ENCODE measurements at regions of chr1 and their contacts with region 1.

Region 1: GRCh38 chr1:1554926-1555915 is 14.8 kb upstream of the TMEM240 start:
- DNase-seq: peak; percentile 48 to 78 (median 66)
- ATAC-seq: peak; percentile 67
- H3K4me3 ChIP-seq: no peak overlapping the region
- H3K27ac ChIP-seq: no peak overlapping the region
- H3K4me1 ChIP-seq: peaks cover 0 to 38% of the 10 kb centered on the region in 2 experiments; a peak in 3 of 5 replicates
- H3K27me3 ChIP-seq: no peaks in the 10 kb centered on the region
- CTCF ChIP-seq: no peak
- EP300 ChIP-seq: no peak
- POLR2A ChIP-seq: peak; percentile 54; the same call in 1 of the 2 replicates
- RAD21 ChIP-seq: no peak

Region 2: GRCh38 chr1:1543706-1544099 is 11.5 kb before region 1 on chr1:
- CTCF ChIA-PET with region 1: no interaction called
- POLR2A ChIA-PET with region 1: interaction called, 36 read pairs
- in situ Hi-C with region 1: no loop called
- intact Hi-C with region 1: no loop called
- DNase-seq: peak in 1 of 4 experiments; percentile 54
- ATAC-seq: no peak
- H3K4me3 ChIP-seq: no peak overlapping the region
- H3K27ac ChIP-seq: no peak overlapping the region
- H3K4me1 ChIP-seq: peaks cover 0 to 40% of the 10 kb centered on the region in 2 experiments; a peak in 2 of 5 replicates
- H3K27me3 ChIP-seq: no peaks in the 10 kb centered on the region
- CTCF ChIP-seq: no peak
- EP300 ChIP-seq: no peak
- POLR2A ChIP-seq: no peak
- RAD21 ChIP-seq: no peak

Region 3: GRCh38 chr1:1567891-1568291 is 12.7 kb after region 1 on chr1:
- CTCF ChIA-PET with region 1: no interaction called
- POLR2A ChIA-PET with region 1: interaction called, 14 read pairs
- in situ Hi-C with region 1: no loop called
- intact Hi-C with region 1: no loop called
- DNase-seq: no peak
- ATAC-seq: no peak
- H3K4me3 ChIP-seq: no peak overlapping the region
- H3K27ac ChIP-seq: no peak overlapping the region
- H3K4me1 ChIP-seq: peaks cover 3 to 12% of the 10 kb centered on the region in 2 experiments; a peak in 4 of 5 replicates
- H3K27me3 ChIP-seq: no peaks in the 10 kb centered on the region
- CTCF ChIP-seq: no peak
- EP300 ChIP-seq: no peak
- POLR2A ChIP-seq: peak; percentile 14; the same call in 1 of the 2 replicates
- RAD21 ChIP-seq: no peak

Region 4: DNA sequence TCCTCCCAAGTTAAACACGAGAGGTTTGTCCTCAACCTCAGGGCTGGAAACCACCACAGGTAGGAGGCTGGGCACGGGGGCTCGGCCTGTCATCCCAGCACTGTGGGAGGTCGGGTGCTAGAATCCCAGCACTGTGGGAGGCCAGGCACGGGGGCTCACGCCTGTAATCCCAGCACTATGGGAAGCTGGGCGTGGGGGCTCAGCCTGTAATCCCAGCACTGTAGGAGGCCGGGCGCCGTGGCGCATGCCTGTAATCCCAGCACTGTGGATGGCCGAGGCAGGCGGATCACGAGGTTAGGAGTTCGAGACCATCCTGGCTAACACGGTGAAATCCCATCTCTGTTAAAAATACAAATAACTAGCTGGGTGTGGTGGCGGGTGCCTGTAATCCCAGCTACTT is 175.6 kb after region 1 on chr1:
- CTCF ChIA-PET with region 1: no interaction called
- POLR2A ChIA-PET with region 1: no interaction called
- in situ Hi-C with region 1: no loop called
- intact Hi-C with region 1: no loop called
- DNase-seq: no peak
- ATAC-seq: no peak
- H3K4me3 ChIP-seq: no peak overlapping the region
- H3K27ac ChIP-seq: no peak overlapping the region
- H3K4me1 ChIP-seq: peaks cover 2 to 4% of the 10 kb centered on the region in 2 experiments; a peak in 3 of 5 replicates
- H3K27me3 ChIP-seq: no peaks in the 10 kb centered on the region
- CTCF ChIP-seq: no peak
- EP300 ChIP-seq: no peak
- POLR2A ChIP-seq: no peak
- RAD21 ChIP-seq: no peak